ENCODE measurements at regions of chr12 and their contacts with region 1.

Region 1: GRCh38 chr12:66409195-66409871 is 107.0 kb downstream of the HELB start:
- DNase-seq: peak; percentile 26
- H3K4me3 Mint-ChIP-seq: no peak overlapping the region
- H3K27ac Mint-ChIP-seq: no peak overlapping the region
- H3K4me1 Mint-ChIP-seq: no peaks in the 10 kb centered on the region
- H3K27me3 Mint-ChIP-seq: peaks cover 19% of the 10 kb centered on the region

Region 2: DNA sequence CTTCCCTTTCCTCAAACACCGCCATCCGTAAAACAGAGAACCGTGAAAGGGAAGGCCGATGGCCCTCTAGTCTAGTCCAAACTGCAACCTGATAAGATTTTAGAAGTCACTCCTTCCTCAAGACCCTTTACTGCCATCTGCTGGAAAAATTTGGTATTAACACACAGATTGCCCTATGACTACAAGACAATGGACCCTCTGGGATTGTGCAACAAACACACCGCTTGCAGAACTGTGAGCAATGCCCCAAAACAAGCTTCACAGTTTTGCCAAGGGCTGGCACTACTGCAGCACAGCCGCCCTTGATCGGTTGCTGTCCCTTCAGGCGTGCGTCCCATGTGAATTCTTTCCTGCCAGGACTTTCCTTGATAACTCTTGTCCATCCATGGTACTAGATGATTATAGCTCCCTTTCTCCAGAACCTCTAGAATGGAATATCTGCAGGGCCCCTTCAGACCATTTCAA is 301.9 kb before region 1 on chr12:
- intact Hi-C with region 1: loop called (anchors 5 kb)
- DNase-seq: peak; percentile 36
- H3K4me3 Mint-ChIP-seq: no peak overlapping the region
- H3K27ac Mint-ChIP-seq: no peak overlapping the region
- H3K4me1 Mint-ChIP-seq: peaks cover 8% of the 10 kb centered on the region
- H3K27me3 Mint-ChIP-seq: peaks cover 21% of the 10 kb centered on the region

Region 3: DNA sequence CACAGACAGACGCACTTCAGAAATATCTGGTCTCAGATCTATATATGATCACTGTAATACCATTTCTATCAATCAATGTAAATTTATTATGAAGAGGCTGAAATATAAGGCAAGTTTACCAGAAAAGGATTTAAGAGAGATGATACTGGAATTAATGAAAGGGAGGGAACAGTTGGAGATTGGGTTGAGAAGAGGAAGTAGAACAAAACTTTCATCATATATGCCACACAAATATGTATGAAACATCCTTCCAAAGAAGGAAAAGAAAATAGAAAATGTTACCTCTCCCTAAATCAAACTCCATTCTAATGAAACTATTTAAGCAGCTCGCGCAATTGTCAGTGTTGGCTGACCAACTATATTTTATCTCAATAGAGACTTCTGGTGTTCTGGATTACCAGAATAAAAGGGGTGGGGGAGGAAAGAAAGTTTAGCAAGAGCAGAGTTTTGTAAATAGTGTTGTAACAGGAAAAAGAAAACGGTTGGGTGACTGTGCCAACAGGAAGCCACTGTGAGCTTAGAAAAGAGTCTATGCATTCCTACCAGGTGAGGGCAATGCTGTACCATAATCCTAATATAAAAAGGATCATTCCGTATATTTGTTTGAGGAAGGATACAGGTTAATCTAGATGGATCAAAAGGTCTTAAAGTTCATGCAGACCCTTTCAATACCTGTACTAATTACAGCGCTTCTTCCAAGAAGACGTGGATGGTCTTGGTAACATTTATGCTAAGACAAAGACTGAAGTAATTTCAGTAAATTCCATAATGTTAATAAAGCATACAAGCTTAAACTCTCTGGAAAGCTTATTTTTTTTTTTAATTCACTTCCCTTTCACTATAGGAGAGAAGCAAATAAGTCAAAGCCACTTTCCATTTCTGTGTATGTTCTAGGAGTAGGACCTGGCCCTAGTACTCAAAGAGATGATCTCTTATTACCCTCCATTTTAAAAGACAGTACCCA is 264.3 kb before region 1 on chr12:
- intact Hi-C with region 1: loop called (anchors 1 kb)
- DNase-seq: no peak
- H3K4me3 Mint-ChIP-seq: no peak overlapping the region
- H3K27ac Mint-ChIP-seq: peak overlapping the region; percentile 46
- H3K4me1 Mint-ChIP-seq: peaks cover 19% of the 10 kb centered on the region
- H3K27me3 Mint-ChIP-seq: no peaks in the 10 kb centered on the region

Region 4: GRCh38 chr12:66169221-66170170 is 239.8 kb before region 1 on chr12 and contains the start of gene TMBIM4:
- intact Hi-C with region 1: loop called (anchors 1 kb)
- DNase-seq: peak; percentile 81
- H3K4me3 Mint-ChIP-seq: peak within 1 kb of the TSS; percentile 91
- H3K27ac Mint-ChIP-seq: peak within 1 kb of the TSS; percentile 99
- H3K4me1 Mint-ChIP-seq: peaks cover 24% of the 10 kb centered on the region
- H3K27me3 Mint-ChIP-seq: no peaks in the 10 kb centered on the region
- total RNA-seq, gene TMBIM4: 62.4 and 75.0 TPM in 2 replicates

Region 5: GRCh38 chr12:66269757-66270383 is 139.5 kb before region 1 on chr12:
- intact Hi-C with region 1: loop called (anchors 2 kb)
- DNase-seq: no peak
- H3K4me3 Mint-ChIP-seq: no peak overlapping the region
- H3K27ac Mint-ChIP-seq: no peak overlapping the region
- H3K4me1 Mint-ChIP-seq: peaks cover 6% of the 10 kb centered on the region
- H3K27me3 Mint-ChIP-seq: peaks cover 2% of the 10 kb centered on the region

Region 6: GRCh38 chr12:66555113-66555746 is 145.9 kb after region 1 on chr12:
- intact Hi-C with region 1: no loop called
- DNase-seq: no peak
- H3K4me3 Mint-ChIP-seq: no peak overlapping the region
- H3K27ac Mint-ChIP-seq: no peak overlapping the region
- H3K4me1 Mint-ChIP-seq: no peaks in the 10 kb centered on the region
- H3K27me3 Mint-ChIP-seq: no peaks in the 10 kb centered on the region